Spleen (tissue), 13 donors: ENCODE measurements at regions of chr7 and their contacts with region 1.

Region 1: GRCh38 chr7:6323967-6324701 is 51.7 kb upstream of the CYTH3 start:
- DNase-seq: peak; percentile 30
- H3K4me3 ChIP-seq: no peak overlapping the region
- H3K27ac ChIP-seq: no peak overlapping the region
- H3K4me1 ChIP-seq: peaks cover 0 to 7% (median 0%) of the 10 kb centered on the region in 6 donors
- H3K27me3 ChIP-seq: peaks cover 0 to 14% (median 0%) of the 10 kb centered on the region in 7 donors
- CTCF ChIP-seq: no peak
- POLR2A ChIP-seq: no peak

Region 2: DNA sequence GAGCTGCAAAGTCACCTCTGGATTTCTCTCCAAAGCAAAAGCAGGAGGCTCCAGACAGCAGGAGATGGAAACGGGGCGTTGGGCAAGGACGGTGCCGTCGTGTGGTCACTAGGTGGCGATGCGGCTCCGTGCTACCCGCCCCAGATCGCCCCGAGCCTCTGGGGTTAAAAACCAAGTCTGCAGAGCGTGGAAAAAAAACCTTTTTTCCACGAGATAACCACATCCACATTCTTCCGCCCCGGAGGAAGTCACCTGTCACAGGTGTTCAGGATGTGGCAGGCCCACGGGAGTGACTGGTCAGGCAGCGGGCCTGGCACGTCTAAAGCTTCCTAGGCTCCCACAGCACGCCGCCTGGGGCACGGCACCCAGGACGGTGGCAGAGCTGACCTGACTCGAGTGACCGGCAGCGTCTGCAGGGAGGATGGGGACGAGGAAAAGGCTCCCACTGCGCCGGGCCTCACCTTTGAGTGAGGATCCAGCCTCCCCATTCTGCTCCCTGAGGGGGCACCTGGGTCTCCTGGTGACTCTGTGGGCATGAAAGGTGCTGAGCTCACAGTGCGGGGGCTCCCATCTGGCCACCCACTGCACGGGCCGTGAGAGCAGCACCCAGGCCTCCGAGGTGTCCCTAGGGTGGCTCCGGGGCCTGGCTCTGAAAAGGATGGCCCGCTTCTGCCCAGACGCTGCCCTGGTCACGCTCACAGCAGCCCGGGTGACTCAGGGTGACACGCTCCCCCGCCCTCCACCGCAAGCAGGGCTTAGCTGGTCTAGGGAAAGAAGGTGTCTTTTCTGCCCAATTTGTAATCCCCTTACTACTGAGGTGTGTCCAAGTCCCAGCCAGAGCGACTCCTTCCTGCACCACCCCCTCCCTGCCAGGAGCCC is 829.2 kb before region 1 on chr7:
- intact Hi-C with region 1: no loop called
- DNase-seq: peak; percentile 94
- H3K4me3 ChIP-seq: peak overlapping the region in 7 of 8 donors; percentile 2 to 57 (median 22)
- H3K27ac ChIP-seq: peak overlapping the region in 4 of 8 donors; percentile 26 to 63 (median 34)
- H3K4me1 ChIP-seq: peaks cover 15 to 58% (median 36%) of the 10 kb centered on the region in 6 donors
- H3K27me3 ChIP-seq: no peaks in the 10 kb centered on the region
- CTCF ChIP-seq: peak; percentile 86 to 96 (median 93)
- POLR2A ChIP-seq: no peak

Region 3: GRCh38 chr7:5997222-5997808 is 326.8 kb before region 1 on chr7:
- intact Hi-C with region 1: loop called (anchors 10 kb)
- DNase-seq: no peak
- H3K4me3 ChIP-seq: no peak overlapping the region
- H3K27ac ChIP-seq: no peak overlapping the region
- H3K4me1 ChIP-seq: peaks cover 0 to 5% (median 0%) of the 10 kb centered on the region in 6 donors
- H3K27me3 ChIP-seq: no peaks in the 10 kb centered on the region
- CTCF ChIP-seq: peak; percentile 31 to 72 (median 53)
- POLR2A ChIP-seq: no peak

Region 4: DNA sequence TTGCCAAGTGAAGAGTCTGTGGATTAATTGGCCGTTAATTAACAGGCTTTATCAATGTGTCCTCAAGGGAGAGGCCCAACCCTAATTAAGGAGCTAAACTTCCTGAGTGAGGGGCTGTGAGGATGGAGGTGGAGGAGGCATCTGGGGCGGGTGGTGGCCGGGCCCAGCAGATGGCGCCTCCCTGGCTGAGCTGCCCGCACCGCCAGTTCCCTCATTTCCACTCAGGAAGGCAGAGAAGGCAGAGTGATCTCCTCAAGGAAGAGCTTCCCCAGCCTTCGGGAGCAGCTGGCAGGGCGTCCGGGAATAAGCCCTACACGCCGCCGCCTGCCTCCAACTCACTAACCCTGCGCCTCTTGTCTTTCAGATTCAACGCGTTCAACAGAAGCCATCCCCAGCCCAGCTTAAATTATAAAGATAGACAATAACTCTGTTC is 163.9 kb before region 1 on chr7:
- intact Hi-C with region 1: loop called (anchors 2 kb)
- DNase-seq: no peak
- H3K4me3 ChIP-seq: no peak overlapping the region
- H3K27ac ChIP-seq: peak overlapping the region in 1 of 8 donors; percentile 2
- H3K4me1 ChIP-seq: peaks cover 0 to 27% (median 3%) of the 10 kb centered on the region in 6 donors
- H3K27me3 ChIP-seq: no peaks in the 10 kb centered on the region
- CTCF ChIP-seq: peak in 9 of 11 experiments; percentile 38 to 69 (median 59)
- POLR2A ChIP-seq: no peak

Region 5: GRCh38 chr7:6545398-6546126 is 221.4 kb after region 1 on chr7:
- intact Hi-C with region 1: no loop called
- DNase-seq: no peak
- H3K4me3 ChIP-seq: no peak overlapping the region
- H3K27ac ChIP-seq: no peak overlapping the region
- H3K4me1 ChIP-seq: peaks cover 0 to 10% (median 0%) of the 10 kb centered on the region in 6 donors
- H3K27me3 ChIP-seq: peaks cover 0 to 3% (median 0%) of the 10 kb centered on the region in 7 donors
- CTCF ChIP-seq: no peak
- POLR2A ChIP-seq: no peak